Right ventricle myocardium inferior (tissue), 1 donor: ENCODE measurements at regions of chr11 and their contacts with region 1.

Region 1: GRCh38 chr11:3642071-3642951 is 519 bp upstream of the ART5 start:
- DNase-seq: peak; percentile 93
- ATAC-seq: peak; percentile 92

Region 2: GRCh38 chr11:3683039-3683438 is 40.7 kb after region 1 on chr11:
- intact Hi-C with region 1: loop called (anchors 5 kb)
- DNase-seq: no peak
- ATAC-seq: peak; percentile 69

Region 3: DNA sequence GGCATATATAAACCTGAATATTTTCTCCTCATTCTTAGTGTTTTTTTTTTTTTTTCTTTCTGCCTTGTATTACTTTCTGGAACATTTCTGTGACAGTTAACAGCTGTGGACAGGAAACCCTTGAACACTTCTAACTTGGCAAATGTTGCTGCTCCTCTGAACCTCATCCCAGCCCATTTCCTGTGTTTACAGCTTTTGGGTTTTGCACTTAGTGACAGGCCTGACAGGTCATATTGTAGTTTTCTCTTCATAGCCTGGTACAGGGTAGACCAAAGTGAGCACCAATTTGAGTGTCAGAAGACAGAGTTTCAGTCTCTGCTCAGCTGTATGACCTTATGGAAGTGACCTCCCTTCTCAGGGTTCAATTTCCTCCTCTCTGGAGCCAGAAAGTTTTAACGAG is 304.8 kb after region 1 on chr11:
- intact Hi-C with region 1: no loop called
- DNase-seq: no peak
- ATAC-seq: peak; percentile 90